Activated B cell treated with CpG ODN at 0.5 μM for 24 hours (primary cell): ENCODE measurements at regions of chr14 and their contacts with region 1.

Region 1: GRCh38 chr14:88209273-88209672 is 113.8 kb downstream of the KCNK10 start:
- DNase-seq: peak; percentile 43
- ATAC-seq: peak; percentile 86
- H3K4me3 Mint-ChIP-seq: peak overlapping the region; percentile 79
- H3K27ac Mint-ChIP-seq: peak overlapping the region; percentile 92
- H3K4me1 Mint-ChIP-seq: peaks cover 42% of the 10 kb centered on the region
- H3K27me3 Mint-ChIP-seq: peaks cover 5% of the 10 kb centered on the region
- CTCF ChIP-seq: no peak

Region 2: GRCh38 chr14:87581298-87581697 is 628.0 kb before region 1 on chr14:
- CTCF ChIA-PET with region 1: no interaction called
- POLR2A ChIA-PET with region 1: no interaction called
- intact Hi-C with region 1: no loop called
- DNase-seq: no peak
- ATAC-seq: no peak
- H3K4me3 Mint-ChIP-seq: no peak overlapping the region
- H3K27ac Mint-ChIP-seq: no peak overlapping the region
- H3K4me1 Mint-ChIP-seq: no peaks in the 10 kb centered on the region
- H3K27me3 Mint-ChIP-seq: no peaks in the 10 kb centered on the region
- CTCF ChIP-seq: no peak

Region 3: GRCh38 chr14:88005978-88006851 is 203.1 kb before region 1 on chr14:
- CTCF ChIA-PET with region 1: no interaction called
- POLR2A ChIA-PET with region 1: no interaction called
- intact Hi-C with region 1: loop called (anchors 1 kb)
- DNase-seq: no peak
- ATAC-seq: peak; percentile 79
- H3K4me3 Mint-ChIP-seq: peak overlapping the region; percentile 83
- H3K27ac Mint-ChIP-seq: peak overlapping the region; percentile 84
- H3K4me1 Mint-ChIP-seq: peaks cover 77% of the 10 kb centered on the region
- H3K27me3 Mint-ChIP-seq: no peaks in the 10 kb centered on the region
- CTCF ChIP-seq: no peak

Region 4: GRCh38 chr14:88196925-88197324 is 12.3 kb before region 1 on chr14:
- CTCF ChIA-PET with region 1: interaction called, 3 read pairs
- POLR2A ChIA-PET with region 1: interaction called, 5 read pairs
- intact Hi-C with region 1: loop called (anchors 1 kb)
- DNase-seq: no peak
- ATAC-seq: peak; percentile 57
- H3K4me3 Mint-ChIP-seq: no peak overlapping the region
- H3K27ac Mint-ChIP-seq: no peak overlapping the region
- H3K4me1 Mint-ChIP-seq: peaks cover 4% of the 10 kb centered on the region
- H3K27me3 Mint-ChIP-seq: peaks cover 17% of the 10 kb centered on the region
- CTCF ChIP-seq: no peak

Region 5: DNA sequence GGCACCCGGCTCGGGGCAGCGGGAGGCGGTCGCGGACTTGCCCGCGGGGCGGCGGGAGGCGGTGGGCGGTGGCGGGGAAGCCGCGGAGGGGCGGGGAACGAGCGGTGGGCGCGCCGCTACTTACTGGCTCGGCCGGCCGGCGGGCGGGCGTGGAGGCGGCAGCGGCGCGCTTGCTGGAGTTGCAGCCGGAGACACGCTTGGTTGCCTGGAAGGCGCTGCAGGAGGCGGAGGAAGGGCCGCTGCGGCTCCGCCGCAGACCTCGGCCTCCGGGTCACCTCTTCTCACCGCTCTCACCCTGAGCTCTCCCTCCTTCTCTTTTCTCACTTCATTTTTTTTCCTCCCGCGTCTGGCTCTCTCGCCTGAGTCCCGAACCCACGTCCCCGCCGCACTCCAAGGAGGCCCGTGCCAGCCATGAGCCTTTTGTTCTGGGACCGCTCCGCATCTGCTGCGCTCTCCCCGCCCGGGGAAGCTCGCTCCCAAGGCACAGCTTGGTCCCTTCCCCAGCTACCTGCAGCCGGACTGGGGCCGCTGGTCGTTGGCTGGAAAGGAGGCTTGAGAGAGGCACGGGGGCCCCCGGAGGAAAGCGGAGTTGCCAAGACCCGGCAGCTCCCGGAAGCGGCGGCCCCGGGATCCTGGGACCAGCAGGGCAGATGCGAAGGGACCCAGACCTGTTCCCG is 114.4 kb after region 1 on chr14:
- CTCF ChIA-PET with region 1: no interaction called
- POLR2A ChIA-PET with region 1: no interaction called
- intact Hi-C with region 1: loop called (anchors 5 kb)
- DNase-seq: peak; percentile 30
- ATAC-seq: peak; percentile 80
- H3K4me3 Mint-ChIP-seq: peak overlapping the region; percentile 85
- H3K27ac Mint-ChIP-seq: no peak overlapping the region
- H3K4me1 Mint-ChIP-seq: peaks cover 7% of the 10 kb centered on the region
- H3K27me3 Mint-ChIP-seq: peaks cover 44% of the 10 kb centered on the region
- CTCF ChIP-seq: no peak